ENCODE measurements at regions of chr3 and their contacts with region 1.

Region 1: GRCh38 chr3:101936419-101937356 is 87.4 kb downstream of the NFKBIZ start:
- H3K4me3 Mint-ChIP-seq: no peak overlapping the region
- H3K27ac Mint-ChIP-seq: peak overlapping the region; percentile 61
- H3K4me1 Mint-ChIP-seq: peaks cover 34% of the 10 kb centered on the region
- H3K27me3 Mint-ChIP-seq: peaks cover 11% of the 10 kb centered on the region

Region 2: DNA sequence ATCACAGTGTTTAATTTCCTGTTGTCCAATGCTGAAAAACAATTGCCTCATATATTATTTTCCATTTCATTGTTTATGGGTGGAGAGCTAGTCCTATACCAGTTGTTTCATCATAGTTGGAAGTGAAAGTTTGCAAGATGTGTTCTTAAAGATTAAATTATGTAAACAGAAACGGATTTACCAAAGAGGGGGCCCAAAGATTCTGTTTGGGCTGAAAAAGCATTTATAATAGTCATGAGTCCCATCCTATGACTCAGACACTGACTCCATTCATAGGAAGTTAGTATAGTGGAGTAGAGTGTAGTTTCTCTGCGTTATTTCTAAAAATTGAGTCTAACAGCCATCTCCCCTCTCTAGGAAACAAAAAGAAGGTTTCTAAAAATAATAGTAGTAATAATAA is 63.1 kb before region 1 on chr3:
- intact Hi-C with region 1: loop called (anchors 10 kb)
- H3K4me3 Mint-ChIP-seq: no peak overlapping the region
- H3K27ac Mint-ChIP-seq: no peak overlapping the region
- H3K4me1 Mint-ChIP-seq: peaks cover 24% of the 10 kb centered on the region
- H3K27me3 Mint-ChIP-seq: peaks cover 3% of the 10 kb centered on the region

Region 3: GRCh38 chr3:101898752-101899169 is 37.9 kb before region 1 on chr3:
- intact Hi-C with region 1: loop called (anchors 2 kb)
- H3K4me3 Mint-ChIP-seq: no peak overlapping the region
- H3K27ac Mint-ChIP-seq: peak overlapping the region; percentile 32
- H3K4me1 Mint-ChIP-seq: peaks cover 15% of the 10 kb centered on the region
- H3K27me3 Mint-ChIP-seq: peaks cover under 1% of the 10 kb centered on the region

Measured in dendritic cell treated with granulocyte-macrophage colony-stimulating factor and Interleukin-4, amounts not matched to agents 40 ng/mL and 50 ng/mL, for 4 days (primary cell).